Heart right ventricle (tissue), 16 donors: ENCODE measurements at regions of chr7 and their contacts with region 1.

Region 1: GRCh38 chr7:85061456-85061855 is 125.4 kb downstream of the SEMA3D start:
- DNase-seq: no peak
- ATAC-seq: no peak
- H3K4me3 ChIP-seq: no peak overlapping the region
- H3K27ac ChIP-seq: no peak overlapping the region
- H3K4me1 ChIP-seq: peaks cover 0 to 23% (median 7%) of the 10 kb centered on the region in 9 donors
- H3K27me3 ChIP-seq: no peaks in the 10 kb centered on the region
- CTCF ChIP-seq: no peak

Region 2: GRCh38 chr7:85104432-85105205 is 43.2 kb after region 1 on chr7:
- intact Hi-C with region 1: loop called in 1 of 10 experiments (anchors 5 kb)
- DNase-seq: no peak
- ATAC-seq: peak in 4 of 8 donors; percentile 53 to 67 (median 61)
- H3K4me3 ChIP-seq: peak overlapping the region in 1 of 10 donors; percentile 4
- H3K27ac ChIP-seq: peak overlapping the region in 2 of 10 donors; percentile 6 to 23
- H3K4me1 ChIP-seq: peaks cover 0 to 33% (median 15%) of the 10 kb centered on the region in 9 donors
- H3K27me3 ChIP-seq: no peaks in the 10 kb centered on the region
- CTCF ChIP-seq: no peak